ENCODE measurements at regions of chr4 and their contacts with region 1.

Region 1: DNA sequence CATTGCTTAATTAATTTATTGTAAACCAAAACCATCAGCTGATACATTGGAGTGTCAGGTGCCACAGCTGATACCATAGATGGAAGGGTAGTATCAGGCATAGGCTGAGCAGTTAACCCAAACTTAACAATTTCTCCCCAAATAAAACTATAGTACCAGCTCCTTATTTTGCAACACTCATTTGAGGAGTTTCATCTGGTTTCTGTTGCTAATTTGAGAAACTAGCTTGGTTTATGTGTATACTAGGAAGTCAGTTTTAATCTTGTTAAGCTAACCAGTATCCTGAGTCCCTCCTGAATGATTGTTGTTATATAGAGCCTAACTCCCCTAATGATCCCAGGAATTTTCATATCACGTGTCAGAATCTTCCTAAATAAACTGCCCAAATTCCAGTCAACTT is 12.7 kb downstream of the DCAF16 start:
- DNase-seq: no peak
- CTCF ChIP-seq: no peak

Region 2: DNA sequence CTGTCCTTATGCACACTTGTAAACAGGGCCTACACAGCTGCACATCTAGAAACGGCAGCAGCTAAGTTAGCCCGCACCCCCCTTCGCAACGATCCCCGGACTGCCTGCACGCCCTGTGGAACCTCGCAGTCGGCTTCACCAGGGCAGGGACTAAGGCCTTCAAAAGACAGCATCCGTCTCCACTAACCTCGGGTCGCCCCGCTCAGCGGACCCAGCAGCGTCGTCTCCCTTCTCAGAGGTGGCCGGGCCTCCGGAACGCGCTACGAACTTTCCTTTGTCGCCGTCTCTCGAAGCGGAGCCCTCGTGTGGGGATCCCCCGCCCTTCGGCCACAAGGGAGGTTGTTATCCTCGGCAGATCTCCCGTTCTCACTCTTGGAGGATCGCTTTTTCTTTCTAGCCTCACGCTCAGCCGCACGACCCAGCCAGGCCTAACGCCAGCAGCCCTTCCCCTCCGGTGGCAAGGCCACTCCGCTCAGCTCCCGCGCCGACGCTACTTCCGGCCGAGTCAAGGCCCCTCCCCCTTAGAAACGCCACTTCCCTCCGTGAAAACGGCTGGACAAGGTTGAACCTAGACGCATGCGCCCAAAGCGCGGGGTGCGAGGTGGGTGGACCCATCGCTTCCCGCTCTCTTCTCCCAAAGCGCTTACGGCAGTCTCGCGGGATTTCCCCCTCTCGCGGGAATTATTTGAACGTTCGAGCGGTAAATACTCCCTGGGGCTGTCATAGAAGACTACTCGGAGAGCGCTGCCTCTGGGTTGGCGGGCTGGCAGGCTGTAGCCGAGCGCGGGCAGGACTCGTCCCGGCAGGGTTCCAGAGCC is 12.7 kb after region 1 on chr4 and contains the starts of genes DCAF16 and NCAPG:
- CTCF ChIA-PET with region 1: interaction called, 44 read pairs
- POLR2A ChIA-PET with region 1: interaction called, 3 read pairs
- DNase-seq: peak; percentile 97
- CTCF ChIP-seq: no peak

Measured in GM10248 (cell line).